Heart right ventricle (tissue), 16 donors: ENCODE measurements at regions of chr5 and their contacts with region 1.

Region 1: GRCh38 chr5:72847989-72848473 is 31.6 kb downstream of the TNPO1 start:
- DNase-seq: peak; percentile 86 to 90
- ATAC-seq: peak; percentile 95 to 97 (median 96)
- H3K4me3 ChIP-seq: peak overlapping the region; percentile 64 to 92 (median 82)
- H3K27ac ChIP-seq: peak overlapping the region; percentile 80 to 96 (median 93)
- H3K4me1 ChIP-seq: peaks cover 0 to 81% (median 59%) of the 10 kb centered on the region in 9 donors
- H3K27me3 ChIP-seq: no peaks in the 10 kb centered on the region
- CTCF ChIP-seq: peak in 4 of 9 donors; percentile 13 to 28 (median 14)

Region 2: DNA sequence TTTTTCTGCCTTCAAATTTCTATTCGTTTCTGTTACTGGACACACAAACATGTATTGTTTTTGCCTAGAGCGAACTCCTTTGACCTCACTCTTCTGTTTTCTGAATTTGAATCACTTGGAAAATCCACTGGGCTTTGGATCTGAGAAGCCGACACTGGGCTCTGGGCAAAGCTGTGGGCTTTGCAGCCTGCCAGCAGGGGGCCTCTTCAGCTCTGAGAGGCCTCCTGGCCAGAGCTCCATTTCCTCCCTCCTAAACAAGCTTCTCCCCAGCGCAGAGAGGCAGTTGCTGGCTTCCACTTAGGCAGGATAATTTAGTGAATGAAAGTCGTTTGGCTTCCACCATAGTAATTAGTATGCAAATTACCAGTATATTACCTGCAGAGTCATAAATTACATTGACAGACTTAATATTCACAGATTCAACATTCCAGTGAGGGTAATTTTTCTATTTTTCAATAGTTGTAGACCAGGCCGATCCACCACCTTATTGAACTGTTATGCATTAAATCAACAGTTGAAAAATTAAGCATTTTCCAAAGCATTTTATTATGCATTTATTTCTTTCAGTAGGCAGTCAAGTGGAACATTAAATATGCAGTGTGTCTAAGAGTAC is 236.8 kb before region 1 on chr5:
- intact Hi-C with region 1: loop called in 1 of 10 experiments (anchors 10 kb)
- DNase-seq: peak; percentile 70 to 72
- ATAC-seq: peak; percentile 92 to 98 (median 95)
- H3K4me3 ChIP-seq: no peak overlapping the region
- H3K27ac ChIP-seq: no peak overlapping the region
- H3K4me1 ChIP-seq: peaks cover 0 to 15% (median 0%) of the 10 kb centered on the region in 9 donors
- H3K27me3 ChIP-seq: no peaks in the 10 kb centered on the region
- CTCF ChIP-seq: peak; percentile 84 to 98 (median 93)